ENCODE measurements at regions of chr6 and their contacts with region 1.

Region 1: GRCh38 chr6:123415844-123416468 is 220.8 kb downstream of the TRDN start:
- DNase-seq: peak; percentile 61
- ATAC-seq: no peak
- H3K4me3 Mint-ChIP-seq: no peak overlapping the region
- H3K27ac Mint-ChIP-seq: no peak overlapping the region
- H3K4me1 Mint-ChIP-seq: no peaks in the 10 kb centered on the region
- H3K27me3 Mint-ChIP-seq: no peaks in the 10 kb centered on the region

Region 2: DNA sequence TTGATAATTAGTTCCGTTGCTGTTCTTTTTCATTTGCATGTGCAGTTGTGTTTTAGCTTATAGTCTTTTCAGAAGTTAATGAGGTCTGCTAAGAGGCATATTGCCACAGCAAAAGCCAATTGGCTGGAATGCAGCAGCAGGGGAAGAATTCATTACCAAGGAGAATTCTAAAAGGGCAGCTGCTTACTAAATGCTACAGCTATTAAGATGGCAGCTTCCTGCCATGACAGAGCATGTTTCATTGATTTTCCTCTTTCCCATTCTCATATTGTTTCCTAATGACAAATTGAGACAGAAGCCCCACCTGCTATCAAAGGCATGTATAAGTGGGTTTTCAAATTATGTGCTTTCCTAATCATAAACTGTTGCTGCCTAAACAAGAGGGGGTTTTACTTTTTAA is 353.3 kb before region 1 on chr6:
- CTCF ChIA-PET with region 1: no interaction called
- POLR2A ChIA-PET with region 1: no interaction called
- intact Hi-C with region 1: no loop called
- DNase-seq: no peak
- ATAC-seq: no peak
- H3K4me3 Mint-ChIP-seq: no peak overlapping the region
- H3K27ac Mint-ChIP-seq: no peak overlapping the region
- H3K4me1 Mint-ChIP-seq: no peaks in the 10 kb centered on the region
- H3K27me3 Mint-ChIP-seq: no peaks in the 10 kb centered on the region

Region 3: GRCh38 chr6:123551939-123552707 is 136.2 kb after region 1 on chr6:
- CTCF ChIA-PET with region 1: no interaction called
- POLR2A ChIA-PET with region 1: no interaction called
- intact Hi-C with region 1: no loop called
- DNase-seq: no peak
- ATAC-seq: no peak
- H3K4me3 Mint-ChIP-seq: no peak overlapping the region
- H3K27ac Mint-ChIP-seq: no peak overlapping the region
- H3K4me1 Mint-ChIP-seq: no peaks in the 10 kb centered on the region
- H3K27me3 Mint-ChIP-seq: no peaks in the 10 kb centered on the region

Region 4: GRCh38 chr6:123715006-123715875 is 299.3 kb after region 1 on chr6:
- CTCF ChIA-PET with region 1: interaction called, 4 read pairs
- POLR2A ChIA-PET with region 1: no interaction called
- intact Hi-C with region 1: loop called (anchors 1 kb)
- DNase-seq: no peak
- ATAC-seq: no peak
- H3K4me3 Mint-ChIP-seq: no peak overlapping the region
- H3K27ac Mint-ChIP-seq: no peak overlapping the region
- H3K4me1 Mint-ChIP-seq: no peaks in the 10 kb centered on the region
- H3K27me3 Mint-ChIP-seq: no peaks in the 10 kb centered on the region

Region 5: DNA sequence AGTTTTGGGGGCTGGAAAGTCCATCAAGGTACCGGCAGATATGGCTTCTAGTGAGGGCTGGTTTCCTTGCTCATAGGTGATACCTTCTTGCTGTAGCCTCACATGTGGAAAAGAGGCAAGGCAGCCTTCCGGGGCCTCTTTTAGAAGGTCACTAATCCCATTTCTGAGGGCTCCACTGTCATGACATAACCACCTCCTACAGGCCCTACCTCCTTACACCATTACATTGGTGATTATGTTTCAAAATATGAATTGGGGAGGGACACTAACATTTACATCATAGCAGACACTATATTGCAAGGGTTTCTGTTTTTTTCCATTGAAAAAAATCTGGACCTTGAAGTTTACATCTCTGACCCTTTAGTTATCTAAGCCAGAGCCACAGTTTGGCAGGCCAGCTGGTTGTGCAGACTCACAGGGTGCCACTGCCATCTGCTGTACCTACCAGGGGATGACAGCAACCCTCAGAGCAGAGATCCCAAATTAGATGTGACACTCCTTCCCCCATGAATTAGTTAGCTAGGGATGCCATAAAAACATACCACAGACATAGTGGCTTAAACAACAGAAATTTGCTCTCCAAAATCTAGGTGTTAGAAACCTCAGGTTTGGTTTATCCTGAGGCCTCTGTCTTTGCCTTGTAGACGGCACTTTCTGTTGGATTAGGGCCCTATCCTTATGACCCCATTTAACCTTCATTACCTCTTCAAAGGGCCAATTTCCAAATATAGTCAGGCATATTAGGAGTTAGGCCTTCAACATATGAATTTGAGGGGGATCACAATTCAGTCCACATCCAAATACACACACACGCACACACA is 1379.9 kb after region 1 on chr6:
- CTCF ChIA-PET with region 1: no interaction called
- POLR2A ChIA-PET with region 1: no interaction called
- intact Hi-C with region 1: loop called in 1 of 2 experiments (anchors 2 kb)
- DNase-seq: peak; percentile 17
- ATAC-seq: no peak
- H3K4me3 Mint-ChIP-seq: no peak overlapping the region
- H3K27ac Mint-ChIP-seq: no peak overlapping the region
- H3K4me1 Mint-ChIP-seq: no peaks in the 10 kb centered on the region
- H3K27me3 Mint-ChIP-seq: no peaks in the 10 kb centered on the region

Measured in activated CD4-positive, alpha-beta T cell treated with anti-CD3 and anti-CD28 coated beads for 36 hours (primary cell).